CD8-positive, alpha-beta T cell (primary cell): ENCODE measurements at regions of chr15 and their contacts with region 1.

Region 1: GRCh38 chr15:58484791-58485600 is 53.2 kb downstream of the LIPC start:
- DNase-seq: peak in 6 of 9 experiments; percentile 24 to 66 (median 43)
- ATAC-seq: peak; percentile 83
- H3K4me3 ChIP-seq: peak overlapping the region; percentile 13 to 14
- H3K4me3 Mint-ChIP-seq: peak overlapping the region; percentile 50
- H3K27ac ChIP-seq: peak overlapping the region; percentile 41 to 67
- H3K27ac Mint-ChIP-seq: peak overlapping the region; percentile 87
- H3K4me1 ChIP-seq: peaks cover 55% of the 10 kb centered on the region
- H3K4me1 Mint-ChIP-seq: peaks cover 45% of the 10 kb centered on the region
- H3K27me3 ChIP-seq: no peaks in the 10 kb centered on the region
- H3K27me3 Mint-ChIP-seq: no peaks in the 10 kb centered on the region
- CTCF ChIP-seq: no peak

Region 2: DNA sequence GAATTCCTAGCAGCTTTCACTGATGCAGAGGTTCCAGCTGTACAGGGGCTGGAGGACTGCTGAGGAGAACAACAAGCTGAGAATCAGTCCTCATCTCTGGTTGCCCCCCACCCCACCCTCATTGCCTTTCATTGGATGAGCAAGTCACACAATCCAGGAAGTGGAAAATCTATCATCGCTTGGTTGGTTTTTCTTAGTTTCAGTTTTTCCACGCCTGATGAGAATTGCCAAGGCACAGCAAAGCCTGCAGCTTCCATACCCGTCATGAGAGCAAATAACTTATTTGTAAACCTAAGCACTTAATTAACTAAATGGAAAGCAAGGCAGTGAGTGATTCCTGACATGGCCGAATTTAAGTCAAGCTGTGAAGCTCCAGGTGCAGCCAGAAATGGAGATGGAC is 74.6 kb before region 1 on chr15:
- CTCF ChIA-PET with region 1: no interaction called
- POLR2A ChIA-PET with region 1: no interaction called
- intact Hi-C with region 1: loop called in 1 of 2 experiments (anchors 10 kb)
- DNase-seq: peak in 8 of 9 experiments; percentile 19 to 73 (median 52)
- ATAC-seq: peak; percentile 95
- H3K4me3 ChIP-seq: peak overlapping the region; percentile 37 to 51
- H3K4me3 Mint-ChIP-seq: peak overlapping the region; percentile 89
- H3K27ac ChIP-seq: peak overlapping the region; percentile 20 to 37
- H3K27ac Mint-ChIP-seq: peak overlapping the region; percentile 90
- H3K4me1 ChIP-seq: peaks cover 7% of the 10 kb centered on the region
- H3K4me1 Mint-ChIP-seq: peaks cover 17% of the 10 kb centered on the region
- H3K27me3 ChIP-seq: no peaks in the 10 kb centered on the region
- H3K27me3 Mint-ChIP-seq: no peaks in the 10 kb centered on the region
- CTCF ChIP-seq: no peak

Region 3: GRCh38 chr15:58447271-58448010 is 37.6 kb before region 1 on chr15:
- CTCF ChIA-PET with region 1: no interaction called
- POLR2A ChIA-PET with region 1: no interaction called
- intact Hi-C with region 1: no loop called
- DNase-seq: no peak
- ATAC-seq: no peak
- H3K4me3 ChIP-seq: no peak overlapping the region
- H3K4me3 Mint-ChIP-seq: no peak overlapping the region
- H3K27ac ChIP-seq: no peak overlapping the region
- H3K27ac Mint-ChIP-seq: peak overlapping the region; percentile 71
- H3K4me1 ChIP-seq: no peaks in the 10 kb centered on the region
- H3K4me1 Mint-ChIP-seq: peaks cover 6% of the 10 kb centered on the region
- H3K27me3 ChIP-seq: no peaks in the 10 kb centered on the region
- H3K27me3 Mint-ChIP-seq: no peaks in the 10 kb centered on the region
- CTCF ChIP-seq: no peak

Region 4: GRCh38 chr15:58460872-58461271 is 24.1 kb before region 1 on chr15:
- CTCF ChIA-PET with region 1: no interaction called
- POLR2A ChIA-PET with region 1: no interaction called
- intact Hi-C with region 1: loop called in 1 of 2 experiments (anchors 1 kb)
- DNase-seq: peak in 1 of 9 experiments; percentile 33
- ATAC-seq: no peak
- H3K4me3 ChIP-seq: no peak overlapping the region
- H3K4me3 Mint-ChIP-seq: no peak overlapping the region
- H3K27ac ChIP-seq: no peak overlapping the region
- H3K27ac Mint-ChIP-seq: no peak overlapping the region
- H3K4me1 ChIP-seq: peaks cover 44% of the 10 kb centered on the region
- H3K4me1 Mint-ChIP-seq: peaks cover 59% of the 10 kb centered on the region
- H3K27me3 ChIP-seq: no peaks in the 10 kb centered on the region
- H3K27me3 Mint-ChIP-seq: no peaks in the 10 kb centered on the region
- CTCF ChIP-seq: no peak

Region 5: GRCh38 chr15:58517682-58518525 is 32.9 kb after region 1 on chr15:
- CTCF ChIA-PET with region 1: no interaction called
- POLR2A ChIA-PET with region 1: no interaction called
- intact Hi-C with region 1: loop called in 1 of 2 experiments (anchors 5 kb)
- DNase-seq: peak in 6 of 9 experiments; percentile 3 to 58 (median 37)
- ATAC-seq: peak; percentile 62
- H3K4me3 ChIP-seq: no peak overlapping the region
- H3K4me3 Mint-ChIP-seq: peak overlapping the region; percentile 29
- H3K27ac ChIP-seq: peak overlapping the region; percentile 29 to 60
- H3K27ac Mint-ChIP-seq: peak overlapping the region; percentile 70
- H3K4me1 ChIP-seq: peaks cover 32% of the 10 kb centered on the region
- H3K4me1 Mint-ChIP-seq: peaks cover 51% of the 10 kb centered on the region
- H3K27me3 ChIP-seq: no peaks in the 10 kb centered on the region
- H3K27me3 Mint-ChIP-seq: no peaks in the 10 kb centered on the region
- CTCF ChIP-seq: no peak